ENCODE measurements at regions of chr10 and their contacts with region 1.

Region 1: GRCh38 chr10:17113889-17114540 is 15.6 kb downstream of the CUBN start:
- DNase-seq: peak in 1 of 2 experiments; percentile 18
- H3K4me3 ChIP-seq: no peak overlapping the region
- H3K4me3 Mint-ChIP-seq: no peak overlapping the region
- H3K27ac Mint-ChIP-seq: peak overlapping the region; percentile 48
- H3K4me1 ChIP-seq: peaks cover 43% of the 10 kb centered on the region
- H3K4me1 Mint-ChIP-seq: peaks cover 32% of the 10 kb centered on the region
- H3K27me3 ChIP-seq: no peaks in the 10 kb centered on the region
- H3K27me3 Mint-ChIP-seq: no peaks in the 10 kb centered on the region
- CTCF ChIP-seq: no peak

Region 2: DNA sequence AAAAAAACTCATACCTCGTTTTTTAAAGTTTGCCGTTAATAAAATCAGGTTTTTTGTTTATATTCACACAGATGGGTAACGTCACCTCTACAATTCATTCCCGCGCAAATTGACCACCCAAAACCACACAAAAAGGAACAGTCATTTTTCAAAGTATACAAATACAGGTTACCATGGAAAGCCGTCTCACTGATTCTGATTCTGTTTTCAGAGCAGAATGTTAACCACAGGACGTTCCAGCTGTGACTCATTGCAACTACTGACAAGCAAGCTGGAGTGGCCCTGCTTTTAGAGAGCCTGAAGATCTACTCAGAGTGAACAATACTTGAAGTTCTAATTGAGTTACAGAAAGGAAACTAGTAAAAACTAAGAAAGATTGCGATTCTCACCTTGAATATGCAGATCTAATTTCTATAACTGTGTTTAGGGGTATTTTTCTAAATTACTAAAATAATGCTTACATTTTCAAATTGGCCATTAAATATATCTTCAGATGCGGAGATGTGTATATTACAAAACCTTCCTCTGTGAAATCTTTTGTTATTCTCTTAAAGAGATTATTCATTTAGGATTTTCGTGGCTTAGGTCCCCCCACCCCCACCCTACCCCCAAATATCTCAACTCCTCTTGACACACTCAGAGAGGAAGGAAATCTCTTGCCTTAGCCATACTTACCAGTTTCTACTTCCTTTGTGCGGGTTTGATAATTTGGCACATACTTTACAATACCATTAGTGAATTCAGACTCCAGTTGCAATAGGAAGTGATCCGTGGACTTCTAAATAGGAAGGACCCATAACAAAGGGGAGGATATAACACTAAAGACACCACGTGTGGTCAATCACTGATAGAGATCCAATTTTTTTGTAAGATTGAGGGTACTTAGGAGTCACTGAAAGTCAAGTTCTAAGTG is 90.4 kb before region 1 on chr10:
- CTCF ChIA-PET with region 1: no interaction called
- POLR2A ChIA-PET with region 1: no interaction called
- intact Hi-C with region 1: no loop called
- DNase-seq: no peak
- H3K4me3 ChIP-seq: no peak overlapping the region
- H3K4me3 Mint-ChIP-seq: no peak overlapping the region
- H3K27ac Mint-ChIP-seq: no peak overlapping the region
- H3K4me1 ChIP-seq: no peaks in the 10 kb centered on the region
- H3K4me1 Mint-ChIP-seq: no peaks in the 10 kb centered on the region
- H3K27me3 ChIP-seq: no peaks in the 10 kb centered on the region
- H3K27me3 Mint-ChIP-seq: no peaks in the 10 kb centered on the region
- CTCF ChIP-seq: no peak

Region 3: DNA sequence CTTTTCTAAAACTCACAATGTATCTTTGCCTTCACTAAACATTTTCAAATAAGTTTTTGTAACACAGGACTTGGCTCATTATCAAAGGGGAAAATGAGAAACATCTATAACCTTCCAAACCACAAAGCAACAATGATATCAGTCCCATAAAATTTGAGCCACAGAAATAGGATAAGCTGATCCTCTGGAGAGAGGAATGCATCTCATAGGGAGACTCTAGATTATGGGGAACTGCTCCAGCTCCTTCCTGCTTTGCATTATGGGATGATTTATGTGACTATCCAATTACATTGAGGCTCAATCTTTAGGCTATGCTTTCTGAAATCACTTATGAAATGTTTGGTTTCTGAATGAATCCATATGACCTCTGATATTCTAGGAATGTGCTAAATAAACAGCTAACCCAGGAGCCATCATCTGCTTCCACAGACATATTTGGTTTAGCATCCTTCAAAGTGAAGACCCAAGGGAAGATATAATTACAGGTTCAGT is 54.8 kb before region 1 on chr10:
- CTCF ChIA-PET with region 1: no interaction called
- POLR2A ChIA-PET with region 1: no interaction called
- intact Hi-C with region 1: loop called (anchors 1 kb)
- DNase-seq: peak in 1 of 2 experiments; percentile 13
- H3K4me3 ChIP-seq: no peak overlapping the region
- H3K4me3 Mint-ChIP-seq: no peak overlapping the region
- H3K27ac Mint-ChIP-seq: peak overlapping the region; percentile 17
- H3K4me1 ChIP-seq: peaks cover 23% of the 10 kb centered on the region
- H3K4me1 Mint-ChIP-seq: peaks cover 22% of the 10 kb centered on the region
- H3K27me3 ChIP-seq: no peaks in the 10 kb centered on the region
- H3K27me3 Mint-ChIP-seq: no peaks in the 10 kb centered on the region
- CTCF ChIP-seq: no peak

Region 4: GRCh38 chr10:17088118-17088806 is 25.8 kb before region 1 on chr10:
- CTCF ChIA-PET with region 1: no interaction called
- POLR2A ChIA-PET with region 1: no interaction called
- intact Hi-C with region 1: no loop called
- DNase-seq: no peak
- H3K4me3 ChIP-seq: no peak overlapping the region
- H3K4me3 Mint-ChIP-seq: no peak overlapping the region
- H3K27ac Mint-ChIP-seq: no peak overlapping the region
- H3K4me1 ChIP-seq: no peaks in the 10 kb centered on the region
- H3K4me1 Mint-ChIP-seq: no peaks in the 10 kb centered on the region
- H3K27me3 ChIP-seq: no peaks in the 10 kb centered on the region
- H3K27me3 Mint-ChIP-seq: no peaks in the 10 kb centered on the region
- CTCF ChIP-seq: no peak

Region 5: DNA sequence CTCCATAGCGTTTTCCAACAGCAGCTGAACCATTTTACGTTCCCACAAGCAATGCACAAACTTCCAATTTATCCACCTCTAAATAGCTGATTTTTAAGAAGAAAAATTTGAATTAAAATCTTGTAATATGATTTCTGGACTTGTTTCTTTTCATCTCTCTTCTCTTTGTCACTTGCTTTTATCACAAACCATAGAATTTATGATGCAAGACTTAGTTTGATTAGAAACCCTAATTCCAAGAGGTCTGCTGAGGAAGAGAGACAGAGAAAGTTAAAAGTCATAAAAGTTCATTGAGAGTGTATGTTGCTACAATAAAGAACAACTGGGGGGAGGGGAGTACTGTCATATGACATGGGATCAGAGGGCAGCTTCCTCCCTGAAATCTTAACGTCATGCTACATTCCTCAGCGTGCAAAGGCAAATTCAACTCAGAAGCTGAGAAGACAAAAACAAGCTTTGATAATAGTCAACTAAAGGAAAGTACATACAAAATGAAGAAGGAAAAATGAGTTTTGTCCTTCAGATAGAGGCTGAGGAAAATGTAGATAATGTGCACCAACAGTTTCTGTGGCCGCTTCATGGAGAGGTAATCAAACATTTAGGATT is 34.0 kb after region 1 on chr10:
- CTCF ChIA-PET with region 1: no interaction called
- POLR2A ChIA-PET with region 1: no interaction called
- intact Hi-C with region 1: loop called (anchors 1 kb)
- DNase-seq: peak; percentile 58 to 65
- H3K4me3 ChIP-seq: no peak overlapping the region
- H3K4me3 Mint-ChIP-seq: no peak overlapping the region
- H3K27ac Mint-ChIP-seq: peak overlapping the region; percentile 51
- H3K4me1 ChIP-seq: peaks cover 34% of the 10 kb centered on the region
- H3K4me1 Mint-ChIP-seq: peaks cover 46% of the 10 kb centered on the region
- H3K27me3 ChIP-seq: no peaks in the 10 kb centered on the region
- H3K27me3 Mint-ChIP-seq: no peaks in the 10 kb centered on the region
- CTCF ChIP-seq: no peak

Region 6: GRCh38 chr10:17229969-17230682 is 116.1 kb after region 1 on chr10:
- CTCF ChIA-PET with region 1: interaction called, 3 read pairs
- POLR2A ChIA-PET with region 1: no interaction called
- intact Hi-C with region 1: loop called (anchors 1 kb)
- DNase-seq: peak; percentile 85 to 89
- H3K4me3 ChIP-seq: peak overlapping the region; percentile 58
- H3K4me3 Mint-ChIP-seq: peak overlapping the region; percentile 78
- H3K27ac Mint-ChIP-seq: peak overlapping the region; percentile 58
- H3K4me1 ChIP-seq: peaks cover 21% of the 10 kb centered on the region
- H3K4me1 Mint-ChIP-seq: no peaks in the 10 kb centered on the region
- H3K27me3 ChIP-seq: no peaks in the 10 kb centered on the region; the same call in none of the 2 replicates
- H3K27me3 Mint-ChIP-seq: peaks cover 16% of the 10 kb centered on the region
- CTCF ChIP-seq: no peak